ENCODE measurements at regions of chr17 and their contacts with region 1.

Region 1: GRCh38 chr17:67221062-67221998 is 23.7 kb downstream of the HELZ start:
- DNase-seq: peak; percentile 68 to 85 (median 73)
- H3K4me3 ChIP-seq: no peak overlapping the region
- H3K27ac ChIP-seq: no peak overlapping the region
- H3K4me1 ChIP-seq: peaks cover 0 to 5% (median 2%) of the 10 kb centered on the region in 4 experiments
- H3K27me3 ChIP-seq: no peaks in the 10 kb centered on the region

Region 2: DNA sequence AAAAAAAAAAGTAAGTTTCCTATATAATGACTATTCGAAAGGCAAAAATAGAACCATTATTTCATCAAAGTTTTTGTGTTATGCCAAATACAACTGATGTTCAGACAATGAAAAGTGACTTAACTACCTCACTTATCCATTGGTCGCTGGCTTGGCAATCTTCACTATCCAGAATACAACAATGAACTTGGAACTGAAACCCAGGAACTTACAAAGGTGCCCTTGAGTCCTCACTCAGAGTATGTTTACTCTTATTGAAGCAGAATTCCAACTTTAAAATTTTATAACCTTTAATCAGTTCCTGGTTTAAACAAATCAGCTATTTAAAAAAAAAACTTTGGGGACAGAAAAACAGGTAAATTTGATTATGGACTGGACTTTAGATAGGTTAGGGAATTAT is 10.4 kb before region 1 on chr17:
- CTCF ChIA-PET with region 1: interaction called, 13 read pairs
- POLR2A ChIA-PET with region 1: no interaction called
- DNase-seq: no peak
- H3K4me3 ChIP-seq: no peak overlapping the region
- H3K27ac ChIP-seq: no peak overlapping the region
- H3K4me1 ChIP-seq: peaks cover 0 to 12% (median 9%) of the 10 kb centered on the region in 4 experiments
- H3K27me3 ChIP-seq: no peaks in the 10 kb centered on the region

Region 3: GRCh38 chr17:67232441-67232840 is 11.1 kb after region 1 on chr17:
- CTCF ChIA-PET with region 1: interaction called, 37 read pairs
- POLR2A ChIA-PET with region 1: no interaction called
- DNase-seq: no peak
- H3K4me3 ChIP-seq: no peak overlapping the region
- H3K27ac ChIP-seq: no peak overlapping the region
- H3K4me1 ChIP-seq: no peaks in the 10 kb centered on the region
- H3K27me3 ChIP-seq: no peaks in the 10 kb centered on the region

Region 4: DNA sequence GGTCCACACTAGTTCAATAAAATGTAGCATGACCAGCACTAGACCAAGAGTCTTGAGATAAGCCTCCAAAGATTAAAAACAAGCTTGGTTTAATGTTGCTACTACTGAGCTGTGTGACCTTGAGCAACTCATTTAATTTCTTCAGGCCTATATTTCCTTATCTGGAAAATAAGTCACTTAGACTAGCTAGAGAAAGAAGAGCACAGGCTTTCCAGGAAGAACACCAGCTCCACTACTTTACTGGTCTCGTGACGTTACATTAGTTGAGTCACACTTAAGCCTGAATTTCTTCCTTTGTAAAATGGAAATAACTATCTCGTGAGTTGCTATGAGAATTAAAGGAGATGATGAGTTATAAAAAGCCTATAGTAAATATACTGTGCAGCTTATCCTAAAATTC is 18.3 kb after region 1 on chr17:
- CTCF ChIA-PET with region 1: interaction called, 37 read pairs
- POLR2A ChIA-PET with region 1: interaction called, 3 read pairs
- DNase-seq: no peak
- H3K4me3 ChIP-seq: no peak overlapping the region
- H3K27ac ChIP-seq: no peak overlapping the region
- H3K4me1 ChIP-seq: peaks cover 9 to 21% (median 13%) of the 10 kb centered on the region in 4 experiments
- H3K27me3 ChIP-seq: no peaks in the 10 kb centered on the region

Region 5: DNA sequence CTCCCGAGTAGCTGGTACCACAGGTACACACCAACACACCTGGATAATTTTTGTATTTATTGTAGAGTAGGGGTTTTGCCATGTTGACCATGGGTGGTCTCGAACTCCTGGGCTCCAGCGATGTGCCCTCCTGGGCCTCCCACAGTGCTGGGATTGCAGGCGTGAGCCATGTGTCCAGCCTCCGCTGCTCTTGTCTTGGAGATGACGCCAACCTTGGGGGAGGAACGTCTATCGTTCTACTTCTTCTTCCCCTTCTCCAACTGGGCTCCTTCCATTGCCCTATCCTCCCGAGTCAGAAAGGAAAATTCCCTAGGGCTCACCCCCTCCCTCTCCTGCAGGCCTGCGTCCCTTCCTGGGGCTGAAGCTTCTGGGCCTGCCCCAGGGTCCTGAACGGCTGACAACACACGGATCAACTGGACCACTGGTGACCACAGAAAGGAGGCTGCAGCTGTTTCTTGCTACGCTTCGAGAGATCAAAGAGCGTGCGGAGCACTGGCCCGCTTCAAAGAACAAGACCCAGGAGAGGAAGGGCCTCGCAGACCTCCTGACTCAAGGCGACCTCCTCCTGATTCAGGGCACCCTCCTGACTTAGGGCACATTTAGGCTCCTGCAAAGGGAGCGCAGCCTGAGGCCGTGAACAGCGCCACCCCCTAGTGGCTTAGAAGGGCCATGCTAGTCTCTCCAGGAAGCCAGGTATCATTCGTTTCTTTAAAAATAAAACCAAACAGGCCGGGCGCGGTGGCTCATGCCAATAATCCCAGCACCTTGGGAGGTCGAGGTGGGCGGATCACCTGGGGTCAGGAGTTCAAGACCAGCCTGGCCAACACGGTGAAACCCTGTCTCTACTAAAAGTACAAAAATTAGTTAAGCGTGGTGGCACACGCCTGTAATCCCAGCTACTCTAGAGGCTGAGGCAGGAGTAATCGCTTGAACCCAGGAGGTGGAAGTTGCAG is 72.2 kb after region 1 on chr17:
- CTCF ChIA-PET with region 1: interaction called, 123 read pairs
- POLR2A ChIA-PET with region 1: no interaction called
- DNase-seq: peak; percentile 71 to 85 (median 82)
- H3K4me3 ChIP-seq: peak overlapping the region in 2 of 7 experiments; percentile 19 to 54
- H3K27ac ChIP-seq: no peak overlapping the region
- H3K4me1 ChIP-seq: peaks cover 0 to 10% (median 6%) of the 10 kb centered on the region in 4 experiments
- H3K27me3 ChIP-seq: no peaks in the 10 kb centered on the region

Measured in common myeloid progenitor, CD34-positive (primary cell).